Activated T-helper 2 cell treated with anti-CD3 and anti-CD28 coated beads, Interferon-gamma antibody, Interleukin-2, Interleukin-4, amounts not matched to agents 10 μg/mL and 5 μg/mL and 100 μg/mL, durations not matched to agents 14 hours and 24 hours and 36 hours (primary cell): ENCODE measurements at regions of chr21 and their contacts with region 1.

Region 1: DNA sequence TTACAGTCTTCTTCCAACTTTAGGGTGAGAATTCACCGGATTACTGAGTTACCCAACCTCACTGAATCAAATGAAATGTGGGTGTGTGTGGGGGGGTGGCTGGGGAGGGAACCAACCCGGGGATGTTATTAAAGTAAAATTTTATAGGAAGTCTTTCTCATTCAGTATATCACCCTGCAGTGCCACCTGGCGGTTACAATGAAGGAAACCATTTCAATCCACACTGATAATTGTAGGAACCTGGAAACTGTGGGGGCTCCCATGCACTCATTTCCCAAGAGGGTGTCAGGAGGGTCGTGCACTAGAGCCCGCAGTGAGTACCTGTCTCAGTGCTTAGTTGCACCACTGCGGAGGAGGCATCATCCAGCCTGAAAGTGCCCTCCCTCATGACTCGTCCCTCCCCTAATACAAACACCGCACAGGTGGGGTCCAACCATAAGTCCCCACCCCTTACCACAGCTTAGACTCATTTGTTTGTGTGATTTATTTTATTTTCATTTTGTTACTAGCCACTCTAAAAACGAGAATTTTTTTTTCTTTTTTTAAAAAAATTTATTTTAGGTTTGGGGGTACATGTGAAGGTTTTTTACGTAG is 29.1 kb upstream of the IGSF5 start:
- DNase-seq: no peak
- H3K4me3 Mint-ChIP-seq: no peak overlapping the region
- H3K27ac Mint-ChIP-seq: no peak overlapping the region
- H3K4me1 Mint-ChIP-seq: no peaks in the 10 kb centered on the region
- H3K27me3 Mint-ChIP-seq: no peaks in the 10 kb centered on the region

Region 2: GRCh38 chr21:39518138-39518846 is 197.6 kb before region 1 on chr21:
- intact Hi-C with region 1: loop called (anchors 1 kb)
- DNase-seq: peak; percentile 15
- H3K4me3 Mint-ChIP-seq: no peak overlapping the region
- H3K27ac Mint-ChIP-seq: no peak overlapping the region
- H3K4me1 Mint-ChIP-seq: no peaks in the 10 kb centered on the region
- H3K27me3 Mint-ChIP-seq: no peaks in the 10 kb centered on the region